GM13976 (cell line): ENCODE measurements at regions of chr12 and their contacts with region 1.

Region 1: DNA sequence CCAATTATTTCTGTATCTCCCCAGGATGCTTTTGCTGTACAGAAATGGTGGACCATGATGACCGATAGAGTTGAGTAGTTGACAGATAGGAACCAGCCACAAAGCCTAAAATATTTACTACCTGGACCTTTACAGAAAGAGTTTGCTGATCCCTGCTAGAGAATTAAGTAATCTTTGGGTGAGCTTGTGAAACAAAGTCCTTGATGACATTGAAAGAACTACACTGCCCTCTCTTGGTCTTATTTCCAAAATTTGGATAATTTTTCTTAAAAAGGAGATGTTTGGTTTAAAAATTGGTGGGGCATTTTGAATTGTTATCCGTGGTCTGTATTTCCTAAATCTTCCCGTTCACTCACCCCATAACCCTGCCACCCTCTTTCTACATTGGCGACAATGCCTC is 13.7 kb upstream of the TCTN1 start:
- DNase-seq: peak; percentile 57
- CTCF ChIP-seq: no peak

Region 2: GRCh38 chr12:109927622-109928021 is 672.6 kb before region 1 on chr12:
- in situ Hi-C with region 1: no loop called
- DNase-seq: peak; percentile 74
- CTCF ChIP-seq: peak; percentile 20

Region 3: GRCh38 chr12:110449799-110450497 is 150.3 kb before region 1 on chr12 and contains the start of gene ARPC3:
- in situ Hi-C with region 1: loop called (anchors 5 kb)
- DNase-seq: peak; percentile 94
- CTCF ChIP-seq: peak; percentile 95

Region 4: GRCh38 chr12:110513842-110514241 is 86.4 kb before region 1 on chr12:
- in situ Hi-C with region 1: loop called (anchors 5 kb)
- DNase-seq: no peak
- CTCF ChIP-seq: no peak

Region 5: GRCh38 chr12:110888256-110888991 is 288.2 kb after region 1 on chr12:
- in situ Hi-C with region 1: loop called (anchors 10 kb)
- DNase-seq: no peak
- CTCF ChIP-seq: no peak

Region 6: GRCh38 chr12:111359231-111359913 is 759.1 kb after region 1 on chr12:
- in situ Hi-C with region 1: no loop called
- DNase-seq: no peak
- CTCF ChIP-seq: no peak